ENCODE measurements at regions of chr6 and their contacts with region 1.

Region 1: GRCh38 chr6:125790358-125791150 is at the start of gene NCOA7:
- DNase-seq: peak; percentile 54 to 57 (median 56)
- H3K4me3 ChIP-seq: peak within 1 kb of the TSS; percentile 65 to 95 (median 82)
- H3K4me3 Mint-ChIP-seq: peak within 1 kb of the TSS; percentile 86 to 93
- H3K27ac ChIP-seq: peak within 1 kb of the TSS; percentile 83
- H3K27ac Mint-ChIP-seq: peak within 1 kb of the TSS; percentile 82 to 95 (median 92)
- H3K4me1 ChIP-seq: peaks cover 24 to 38% of the 10 kb centered on the region in 2 donors
- H3K4me1 Mint-ChIP-seq: peaks cover 46% of the 10 kb centered on the region
- H3K27me3 ChIP-seq: no peaks in the 10 kb centered on the region
- H3K27me3 Mint-ChIP-seq: no peaks in the 10 kb centered on the region
- CTCF ChIP-seq: no peak
- polyA plus RNA-seq, gene NCOA7: 8.3 to 21.9 (median 11.2) TPM

Region 2: GRCh38 chr6:125688138-125688537 is 102.4 kb before region 1 on chr6:
- intact Hi-C with region 1: no loop called
- DNase-seq: no peak
- H3K4me3 ChIP-seq: no peak overlapping the region
- H3K4me3 Mint-ChIP-seq: no peak overlapping the region
- H3K27ac ChIP-seq: no peak overlapping the region
- H3K27ac Mint-ChIP-seq: no peak overlapping the region
- H3K4me1 ChIP-seq: no peaks in the 10 kb centered on the region
- H3K4me1 Mint-ChIP-seq: no peaks in the 10 kb centered on the region
- H3K27me3 ChIP-seq: no peaks in the 10 kb centered on the region
- H3K27me3 Mint-ChIP-seq: peaks cover 3 to 6% (median 4%) of the 10 kb centered on the region in 3 donors
- CTCF ChIP-seq: no peak

Region 3: DNA sequence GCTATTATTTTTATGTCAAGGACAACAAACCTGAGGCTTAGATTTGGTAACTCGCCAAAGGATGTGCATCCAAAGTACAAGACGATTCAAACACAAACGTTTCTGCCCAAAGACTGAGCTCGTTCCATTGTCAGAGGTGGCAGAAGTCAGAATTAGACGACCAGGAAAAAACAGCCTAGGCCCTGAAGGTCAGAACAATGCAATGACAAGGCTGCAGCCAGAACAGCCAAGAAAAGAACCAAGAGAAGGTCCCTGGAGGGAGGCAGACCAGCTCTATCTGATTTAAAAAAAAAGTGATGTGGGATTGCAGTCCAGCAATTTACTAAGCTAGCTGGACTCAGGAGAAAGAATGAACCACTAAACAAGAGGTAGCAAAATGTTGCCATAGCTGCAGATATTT is 54.4 kb after region 1 on chr6:
- intact Hi-C with region 1: loop called in 1 of 2 experiments (anchors 10 kb)
- DNase-seq: no peak
- H3K4me3 ChIP-seq: peak overlapping the region in 1 of 3 experiments; percentile 7
- H3K4me3 Mint-ChIP-seq: no peak overlapping the region
- H3K27ac ChIP-seq: no peak overlapping the region
- H3K27ac Mint-ChIP-seq: peak overlapping the region in 3 of 7 donors; percentile 21 to 77 (median 57)
- H3K4me1 ChIP-seq: peaks cover 14 to 34% of the 10 kb centered on the region in 2 donors
- H3K4me1 Mint-ChIP-seq: peaks cover 31% of the 10 kb centered on the region
- H3K27me3 ChIP-seq: no peaks in the 10 kb centered on the region
- H3K27me3 Mint-ChIP-seq: no peaks in the 10 kb centered on the region
- CTCF ChIP-seq: no peak

Measured in CD14-positive monocyte (primary cell).